ENCODE measurements at regions of chr10 and their contacts with region 1.

Region 1: GRCh38 chr10:93224005-93224779 is 150.5 kb downstream of the CYP26A1 start:
- DNase-seq: no peak

Region 2: GRCh38 chr10:91643700-91644099 is 1580.5 kb before region 1 on chr10:
- intact Hi-C with region 1: loop called in 1 of 2 experiments (anchors 5 kb)
- DNase-seq: no peak

Region 3: DNA sequence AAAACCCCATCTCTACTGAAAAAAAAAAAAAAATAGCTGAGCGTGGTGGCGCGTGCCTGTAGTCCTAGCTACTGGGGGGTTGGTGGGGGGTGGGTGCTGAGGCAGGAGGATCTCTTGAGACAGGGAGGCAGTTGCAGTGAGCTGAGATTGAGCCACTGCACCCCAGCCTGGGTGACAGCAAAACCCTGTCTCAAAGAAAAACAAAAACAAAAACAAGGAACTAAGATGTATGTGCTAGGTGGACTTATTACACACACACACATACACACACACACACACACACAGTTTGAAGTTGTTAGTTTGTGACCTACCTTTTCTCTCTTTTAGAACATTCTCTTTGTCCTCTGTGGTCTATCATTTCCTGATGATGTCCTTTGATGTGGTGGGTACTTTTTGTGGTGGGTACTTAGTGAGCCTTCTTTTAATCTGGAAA is 322.4 kb before region 1 on chr10:
- intact Hi-C with region 1: no loop called
- DNase-seq: no peak

Region 4: GRCh38 chr10:93190372-93190771 is 33.8 kb before region 1 on chr10:
- intact Hi-C with region 1: no loop called
- DNase-seq: no peak